ENCODE measurements at regions of chr10 and their contacts with region 1.

Region 1: GRCh38 chr10:26844396-26844975 is 16.3 kb downstream of the ABI1 start:
- DNase-seq: no peak
- ATAC-seq: no peak
- H3K4me3 Mint-ChIP-seq: no peak overlapping the region
- H3K27ac Mint-ChIP-seq: no peak overlapping the region
- H3K4me1 Mint-ChIP-seq: peaks cover 79% of the 10 kb centered on the region
- H3K27me3 Mint-ChIP-seq: no peaks in the 10 kb centered on the region
- CTCF ChIP-seq: no peak

Region 2: DNA sequence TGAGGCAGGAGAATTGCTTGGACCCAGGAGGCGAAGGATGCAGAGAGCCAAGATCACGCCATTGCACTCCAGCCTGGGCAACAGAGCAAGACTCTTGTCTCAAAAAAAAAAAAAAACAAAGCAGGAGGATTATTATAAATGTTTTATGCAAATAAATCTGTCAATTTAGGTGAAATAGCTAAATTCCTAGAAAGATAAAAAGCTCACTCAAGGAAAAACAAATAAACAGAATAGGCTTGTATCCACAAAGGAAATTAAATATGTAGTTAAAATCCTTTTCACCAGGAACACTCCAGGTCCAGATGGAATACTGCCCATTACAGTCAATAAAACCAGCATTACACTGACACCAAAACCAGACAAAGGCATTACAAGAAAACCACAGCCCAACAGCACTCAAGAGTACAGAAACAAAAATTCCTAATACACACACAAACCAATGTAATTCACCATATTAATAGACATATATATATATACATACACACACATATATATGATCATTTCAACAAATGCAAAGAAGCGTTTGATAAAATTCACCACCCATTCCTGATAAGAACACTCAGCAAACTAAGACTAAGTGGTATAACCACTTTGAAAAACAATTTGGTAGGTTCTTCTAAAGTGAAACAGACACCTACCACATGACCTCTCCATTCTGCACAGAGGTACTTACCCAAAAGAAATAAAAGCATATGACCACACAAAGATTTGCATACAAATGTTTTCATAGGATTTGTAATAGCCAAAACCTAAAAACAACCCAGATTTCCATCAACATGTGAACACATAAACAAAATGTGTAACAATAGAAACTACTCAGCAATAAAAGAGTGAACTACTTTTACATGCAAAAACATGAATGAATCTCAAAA is 22.6 kb before region 1 on chr10:
- CTCF ChIA-PET with region 1: no interaction called
- POLR2A ChIA-PET with region 1: no interaction called
- intact Hi-C with region 1: loop called (anchors 1 kb)
- DNase-seq: no peak
- ATAC-seq: no peak
- H3K4me3 Mint-ChIP-seq: no peak overlapping the region
- H3K27ac Mint-ChIP-seq: no peak overlapping the region
- H3K4me1 Mint-ChIP-seq: peaks cover 64% of the 10 kb centered on the region
- H3K27me3 Mint-ChIP-seq: no peaks in the 10 kb centered on the region
- CTCF ChIP-seq: no peak

Region 3: DNA sequence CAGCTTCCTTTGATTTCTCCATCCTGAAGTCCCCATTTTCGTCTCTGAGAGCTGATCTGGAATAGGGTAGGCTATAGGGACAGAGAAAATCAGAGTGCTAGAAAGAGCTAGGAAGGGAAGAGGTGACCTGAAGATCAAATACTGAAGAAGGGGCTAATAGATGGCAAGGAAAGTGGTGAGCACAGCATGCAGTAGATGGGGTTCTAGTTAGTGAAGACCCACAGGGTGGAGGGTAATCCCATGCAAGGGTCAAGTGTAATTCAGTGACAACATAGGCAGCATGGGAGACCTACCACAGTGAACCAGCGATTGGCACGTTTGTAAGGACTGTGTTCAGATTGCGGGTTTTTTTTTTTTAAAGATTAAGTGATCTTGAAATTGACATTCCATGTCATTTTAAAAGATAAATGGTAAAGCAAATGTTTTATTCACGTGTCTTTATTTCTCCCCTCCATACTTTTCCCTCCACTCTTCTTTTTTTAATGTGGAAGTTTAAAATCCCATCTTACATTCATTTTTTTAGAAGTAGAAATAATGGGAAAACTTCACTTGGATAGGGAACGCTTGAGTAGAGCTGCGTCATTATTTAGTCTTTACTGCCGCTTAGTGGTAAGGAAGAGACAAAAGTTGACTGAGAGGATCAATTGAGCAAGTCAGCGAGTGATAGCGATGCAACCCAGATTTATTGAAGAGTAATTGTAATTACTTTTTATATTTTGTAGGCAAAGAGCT is 37.3 kb after region 1 on chr10:
- CTCF ChIA-PET with region 1: no interaction called
- POLR2A ChIA-PET with region 1: no interaction called
- intact Hi-C with region 1: no loop called
- DNase-seq: no peak
- ATAC-seq: peak; percentile 75
- H3K4me3 Mint-ChIP-seq: no peak overlapping the region
- H3K27ac Mint-ChIP-seq: no peak overlapping the region
- H3K4me1 Mint-ChIP-seq: peaks cover 2% of the 10 kb centered on the region
- H3K27me3 Mint-ChIP-seq: peaks cover 11% of the 10 kb centered on the region
- CTCF ChIP-seq: no peak

Measured in activated B cell treated with CpG ODN at 0.5 μM for 24 hours (primary cell).